GM23248 (cell line): ENCODE measurements at regions of chr17 and their contacts with region 1.

Region 1: GRCh38 chr17:27630607-27631410 is at the start of gene LGALS9:
- DNase-seq: peak; percentile 57
- H3K4me3 ChIP-seq: peak within 1 kb of the TSS; percentile 40; the same call in 1 of the 2 replicates
- H3K27ac ChIP-seq: no peak within 1 kb of the TSS
- H3K4me1 ChIP-seq: peaks cover 17% of the 10 kb centered on the region
- H3K27me3 ChIP-seq: no peaks in the 10 kb centered on the region
- total RNA-seq, gene LGALS9: 1.3 and 3.2 TPM in 2 replicates

Region 2: GRCh38 chr17:27526604-27527230 is 104.1 kb before region 1 on chr17:
- in situ Hi-C with region 1: loop called (anchors 25 kb)
- DNase-seq: peak; percentile 50
- H3K4me3 ChIP-seq: no peak overlapping the region
- H3K27ac ChIP-seq: no peak overlapping the region
- H3K4me1 ChIP-seq: no peaks in the 10 kb centered on the region
- H3K27me3 ChIP-seq: no peaks in the 10 kb centered on the region